Psoas muscle (tissue), 8 donors: ENCODE measurements at regions of chr10 and their contacts with region 1.

Region 1: DNA sequence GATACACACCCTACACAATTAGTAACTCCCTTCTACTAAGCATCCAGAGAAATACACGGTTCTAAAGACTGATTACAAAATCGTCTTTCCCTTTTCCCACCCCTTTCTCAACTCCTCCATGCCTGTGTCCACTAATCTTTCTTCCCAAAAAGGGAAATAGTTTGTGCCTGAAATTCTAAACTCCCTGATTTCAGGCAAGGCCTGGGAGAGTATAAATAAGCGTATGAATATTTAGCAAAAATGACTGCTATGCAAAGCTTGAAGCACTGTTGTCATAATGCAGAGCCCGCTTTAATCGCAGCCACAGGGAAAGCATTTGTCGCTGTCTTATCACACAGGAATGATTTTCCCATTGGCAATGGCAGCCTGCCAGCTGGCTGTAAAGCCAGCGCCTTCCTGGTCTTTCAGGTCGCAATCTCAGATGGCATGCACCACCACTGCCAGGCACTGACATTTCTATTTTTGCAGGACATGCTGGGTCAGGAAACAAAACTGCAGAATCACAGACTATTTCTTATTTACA is 142.9 kb upstream of the PCGF5 start:
- DNase-seq: peak; percentile 63 to 81
- ATAC-seq: peak; percentile 86 to 95 (median 92)
- H3K4me3 ChIP-seq: peak overlapping the region; percentile 47
- H3K27ac ChIP-seq: peak overlapping the region; percentile 71
- H3K4me1 ChIP-seq: peaks cover 21% of the 10 kb centered on the region
- H3K27me3 ChIP-seq: no peaks in the 10 kb centered on the region
- CTCF ChIP-seq: no peak

Region 2: DNA sequence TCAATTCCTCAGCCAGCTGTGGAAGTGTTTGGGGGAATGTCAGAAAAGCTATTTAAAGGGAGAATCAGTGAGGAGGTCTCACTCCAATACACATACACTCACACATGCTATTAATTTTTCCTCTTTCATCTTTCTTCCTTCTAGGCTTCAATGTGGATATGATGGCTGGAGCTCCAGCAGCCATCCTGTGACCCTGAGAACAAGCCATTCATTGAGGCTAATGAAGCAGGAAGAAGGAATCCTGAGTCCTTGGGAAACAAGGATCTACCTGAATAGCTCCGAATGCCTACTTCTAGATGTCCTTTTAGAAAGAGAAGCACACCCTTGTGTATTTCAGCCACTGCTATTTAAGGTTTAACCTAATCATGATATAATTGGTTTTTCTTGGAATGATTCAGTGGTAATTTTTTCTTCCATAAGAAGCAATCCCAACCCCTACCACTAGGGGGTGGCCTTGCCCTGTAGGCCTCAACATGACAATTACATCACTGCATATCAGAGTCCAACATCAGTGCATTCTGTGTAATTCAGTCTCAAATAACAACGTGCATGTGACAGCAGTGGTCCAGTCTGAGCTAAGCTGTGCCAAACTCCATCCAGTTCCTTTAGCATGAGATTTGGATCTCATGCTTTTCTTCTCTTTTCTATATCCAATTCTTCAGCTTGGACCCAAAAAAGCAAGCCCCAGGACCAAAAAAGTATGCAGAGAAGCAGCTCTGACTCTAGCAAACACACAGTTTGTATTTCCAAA is 71.4 kb before region 1 on chr10:
- intact Hi-C with region 1: loop called in 1 of 2 experiments (anchors 5 kb)
- DNase-seq: peak in 1 of 2 donors; percentile 29
- ATAC-seq: peak; percentile 89 to 96 (median 91)
- H3K4me3 ChIP-seq: no peak overlapping the region
- H3K27ac ChIP-seq: no peak overlapping the region
- H3K4me1 ChIP-seq: no peaks in the 10 kb centered on the region
- H3K27me3 ChIP-seq: no peaks in the 10 kb centered on the region
- CTCF ChIP-seq: peak; percentile 99